ENCODE measurements at regions of chr12 and their contacts with region 1.

Region 1: DNA sequence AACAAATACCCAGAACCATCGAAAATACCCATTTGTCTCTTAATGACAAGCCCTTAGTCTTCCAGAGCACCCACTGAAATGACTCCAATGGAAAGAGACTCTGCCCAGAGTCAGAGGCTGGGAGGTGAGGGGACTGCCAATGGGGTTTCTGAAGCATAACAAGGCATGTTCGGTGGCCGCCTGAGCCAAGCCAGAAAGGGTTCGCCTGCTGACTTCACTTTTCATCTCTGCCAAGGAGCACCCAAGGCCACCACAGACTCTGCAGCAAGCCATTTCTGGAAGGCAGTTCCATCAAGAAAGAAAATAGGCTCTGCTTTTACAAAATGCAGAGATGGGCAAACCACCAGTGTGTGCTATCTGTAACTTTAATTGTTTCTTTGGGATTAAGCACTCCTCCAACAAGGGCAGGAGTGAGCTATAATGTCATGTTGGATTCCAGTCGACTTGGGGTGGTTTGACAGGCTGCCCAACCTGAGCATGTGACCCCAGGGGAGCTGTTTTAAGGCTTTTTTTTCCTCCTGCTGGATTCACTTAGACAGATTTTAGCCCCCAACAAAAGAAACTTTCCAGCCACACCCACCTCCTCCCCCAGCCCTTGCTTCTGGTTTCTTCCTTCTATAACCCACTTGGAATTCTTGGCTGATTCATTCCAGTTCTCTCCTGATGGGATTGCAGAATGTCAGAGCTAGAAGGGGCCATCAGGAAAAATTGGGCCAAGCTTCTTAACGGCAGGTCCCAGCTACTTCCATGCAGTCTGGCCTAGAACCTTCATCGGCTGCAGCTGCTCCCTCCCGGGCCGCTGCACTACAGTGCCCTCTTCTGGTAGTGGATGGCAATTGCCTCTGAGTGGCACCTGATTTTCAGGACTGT is 24.1 kb downstream of the CKAP4 start:
- DNase-seq: no peak
- H3K4me3 ChIP-seq: no peak overlapping the region
- CTCF ChIP-seq: peak; percentile 93

Region 2: DNA sequence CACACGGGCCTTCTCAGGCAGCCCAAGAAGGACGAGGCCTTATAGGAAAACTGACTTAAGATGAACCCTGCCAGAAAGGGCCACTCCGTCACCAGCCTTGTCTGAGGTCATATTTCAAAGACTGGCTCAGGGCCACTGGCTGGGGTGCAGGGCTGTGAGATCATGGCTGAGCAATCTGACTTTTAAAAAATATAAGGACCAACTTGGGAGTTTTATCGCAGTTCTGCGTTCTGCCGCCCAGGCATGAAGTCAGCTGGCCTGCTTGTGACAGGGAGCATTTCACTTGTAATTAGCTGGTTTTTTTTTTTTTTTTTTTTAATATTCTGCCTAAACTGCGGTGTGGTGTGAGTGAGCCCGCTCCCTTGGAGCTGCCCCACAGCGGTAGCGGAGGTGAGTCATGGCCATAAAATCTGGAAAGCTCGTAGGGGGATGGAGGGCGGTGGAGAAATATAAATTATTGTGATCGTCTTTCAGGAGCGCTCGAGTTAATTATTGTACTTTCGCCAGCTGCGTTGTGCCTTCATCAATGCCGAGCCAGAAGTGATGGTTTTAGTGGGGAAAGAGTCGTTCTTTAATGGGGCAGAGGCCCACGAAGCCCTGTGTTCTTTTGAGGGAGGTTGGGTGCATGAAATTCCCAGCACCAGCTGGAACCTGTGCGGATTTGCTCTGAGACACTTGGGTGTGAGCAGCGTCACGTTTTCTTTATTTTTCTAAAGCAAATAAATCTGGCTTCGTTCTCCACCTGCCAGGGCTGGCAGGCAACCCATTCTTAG is 661.3 kb before region 1 on chr12:
- CTCF ChIA-PET with region 1: no interaction called
- POLR2A ChIA-PET with region 1: no interaction called
- DNase-seq: peak; percentile 45
- H3K4me3 ChIP-seq: peak overlapping the region; percentile 29
- CTCF ChIP-seq: no peak

Region 3: DNA sequence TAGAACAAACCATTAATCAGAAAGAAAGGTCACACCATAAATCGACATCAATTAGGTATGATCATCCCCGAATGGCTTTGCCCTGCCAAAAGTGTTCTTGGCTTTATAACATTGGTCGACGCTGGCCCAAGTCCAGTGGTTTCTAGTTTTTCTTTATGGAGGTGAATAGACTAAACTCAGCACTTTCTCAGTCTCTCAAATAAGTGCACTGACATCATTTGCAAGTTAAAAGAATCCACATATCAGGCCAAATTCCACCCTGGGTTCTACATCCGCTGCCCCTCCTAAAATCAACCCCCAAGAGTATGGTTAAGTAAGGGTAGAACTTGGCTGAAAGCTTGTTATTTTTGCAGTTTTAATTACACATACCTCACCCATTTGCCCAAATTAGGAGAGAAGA is 579.0 kb before region 1 on chr12:
- CTCF ChIA-PET with region 1: no interaction called
- POLR2A ChIA-PET with region 1: no interaction called
- DNase-seq: no peak
- H3K4me3 ChIP-seq: no peak overlapping the region
- CTCF ChIP-seq: no peak

Region 4: DNA sequence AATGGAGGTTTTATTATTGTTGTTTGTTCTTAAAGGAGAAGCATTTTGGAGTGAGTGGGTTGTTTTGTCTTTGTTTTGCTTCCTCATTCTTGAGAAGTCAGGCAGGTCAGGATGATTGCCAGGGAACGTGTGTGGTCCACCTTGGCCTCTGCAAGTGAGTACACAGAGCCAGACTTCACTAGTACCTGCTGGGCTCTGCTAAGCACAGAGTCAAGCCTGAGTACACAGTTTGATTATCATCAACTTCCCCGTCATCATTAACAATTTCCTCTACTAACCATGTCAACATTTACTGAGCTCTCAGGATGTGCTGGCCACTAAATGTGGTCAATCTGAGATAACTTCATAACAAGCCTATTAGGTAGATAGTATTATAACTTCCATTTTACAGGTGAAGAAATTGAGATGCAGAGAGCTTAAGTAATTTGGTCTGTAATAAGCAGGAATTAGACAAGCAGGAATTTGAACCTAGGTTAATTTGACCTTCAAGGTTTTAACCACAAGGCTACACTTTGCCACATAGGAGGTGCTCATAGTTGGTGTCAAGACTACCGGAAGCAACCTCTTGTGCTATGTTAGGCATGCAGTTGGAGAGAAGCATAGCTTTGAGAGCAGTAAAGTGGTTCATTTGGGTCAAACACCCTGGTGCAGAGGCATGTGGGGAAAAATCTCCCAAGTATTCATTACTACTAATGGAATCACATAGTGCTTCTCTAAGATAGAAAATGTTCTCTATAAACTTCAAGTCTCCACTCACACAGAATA is 263.2 kb before region 1 on chr12:
- CTCF ChIA-PET with region 1: no interaction called
- POLR2A ChIA-PET with region 1: no interaction called
- DNase-seq: peak; percentile 45
- H3K4me3 ChIP-seq: no peak overlapping the region
- CTCF ChIP-seq: no peak

Region 5: DNA sequence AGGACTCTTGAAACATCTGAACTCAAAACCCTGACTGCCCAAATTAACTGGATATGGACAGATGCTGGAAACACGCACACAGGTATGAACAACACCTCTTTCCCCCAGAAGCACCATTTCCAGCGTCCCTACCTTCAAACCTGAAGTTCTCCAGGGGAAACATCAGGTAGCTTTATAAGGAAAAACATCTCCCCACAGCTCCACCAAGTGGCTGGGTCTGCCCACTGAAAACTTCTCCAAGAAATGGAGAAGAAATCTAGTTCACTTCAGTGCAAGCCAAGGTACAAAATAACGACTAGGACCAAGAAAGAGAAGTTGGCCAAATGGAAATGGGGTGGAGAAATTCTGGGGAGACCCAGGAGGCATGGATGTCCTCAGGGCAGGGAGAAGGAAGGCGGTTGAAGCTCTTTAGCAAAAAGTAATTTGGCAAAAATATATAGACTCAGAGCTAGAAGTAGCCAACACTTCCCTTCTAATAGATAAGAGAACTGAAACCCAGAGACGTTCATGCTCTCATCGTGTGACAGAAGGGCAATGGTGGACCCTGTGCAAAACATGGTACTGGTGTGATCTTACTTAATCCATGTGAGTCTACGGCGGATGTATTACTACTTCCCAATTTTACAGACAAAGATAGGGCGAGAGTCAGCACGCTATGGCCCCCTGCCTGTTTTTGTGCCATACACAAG is 74.5 kb before region 1 on chr12:
- CTCF ChIA-PET with region 1: interaction called, 16 read pairs
- POLR2A ChIA-PET with region 1: no interaction called
- DNase-seq: no peak
- H3K4me3 ChIP-seq: no peak overlapping the region
- CTCF ChIP-seq: peak; percentile 58

Region 6: GRCh38 chr12:106234449-106234848 is 10.7 kb after region 1 on chr12:
- CTCF ChIA-PET with region 1: interaction called, 22 read pairs
- POLR2A ChIA-PET with region 1: no interaction called
- DNase-seq: no peak
- H3K4me3 ChIP-seq: no peak overlapping the region
- CTCF ChIP-seq: no peak

Region 7: GRCh38 chr12:106282457-106283097 is 58.9 kb after region 1 on chr12:
- CTCF ChIA-PET with region 1: interaction called, 71 read pairs
- POLR2A ChIA-PET with region 1: no interaction called
- DNase-seq: no peak
- H3K4me3 ChIP-seq: no peak overlapping the region
- CTCF ChIP-seq: peak; percentile 63

Region 8: DNA sequence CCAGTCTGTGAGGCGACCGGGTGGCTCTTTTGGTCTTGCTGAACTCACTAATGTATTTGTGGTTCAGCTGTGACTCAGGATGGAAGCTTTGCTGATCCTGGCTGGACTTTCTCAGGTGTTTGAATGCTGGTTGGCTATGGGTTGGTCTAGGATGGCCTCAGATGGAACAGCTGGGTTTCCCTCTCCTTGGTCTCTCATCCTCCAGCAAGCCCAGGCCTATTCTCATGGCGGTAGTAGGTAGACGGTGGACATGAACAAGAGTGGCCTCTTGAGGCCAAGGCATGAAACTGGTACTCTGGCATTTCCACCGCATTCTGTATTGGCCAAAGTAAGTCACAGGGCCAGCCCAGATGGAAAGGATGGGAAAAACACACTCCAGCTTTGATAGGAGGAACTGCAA is 122.0 kb after region 1 on chr12:
- CTCF ChIA-PET with region 1: interaction called, 28 read pairs
- POLR2A ChIA-PET with region 1: no interaction called
- DNase-seq: no peak
- H3K4me3 ChIP-seq: no peak overlapping the region
- CTCF ChIP-seq: peak; percentile 49

Region 9: GRCh38 chr12:106428384-106428783 is 204.7 kb after region 1 on chr12:
- CTCF ChIA-PET with region 1: no interaction called
- POLR2A ChIA-PET with region 1: no interaction called
- DNase-seq: no peak
- H3K4me3 ChIP-seq: no peak overlapping the region
- CTCF ChIP-seq: no peak

Region 10: GRCh38 chr12:106841510-106842302 is 618.0 kb after region 1 on chr12:
- CTCF ChIA-PET with region 1: interaction called, 13 read pairs
- POLR2A ChIA-PET with region 1: no interaction called
- DNase-seq: no peak
- H3K4me3 ChIP-seq: no peak overlapping the region
- CTCF ChIP-seq: peak; percentile 44

Measured in AG04449 (cell line).